ENCODE measurements at regions of chr20 and their contacts with region 1.

Region 1: DNA sequence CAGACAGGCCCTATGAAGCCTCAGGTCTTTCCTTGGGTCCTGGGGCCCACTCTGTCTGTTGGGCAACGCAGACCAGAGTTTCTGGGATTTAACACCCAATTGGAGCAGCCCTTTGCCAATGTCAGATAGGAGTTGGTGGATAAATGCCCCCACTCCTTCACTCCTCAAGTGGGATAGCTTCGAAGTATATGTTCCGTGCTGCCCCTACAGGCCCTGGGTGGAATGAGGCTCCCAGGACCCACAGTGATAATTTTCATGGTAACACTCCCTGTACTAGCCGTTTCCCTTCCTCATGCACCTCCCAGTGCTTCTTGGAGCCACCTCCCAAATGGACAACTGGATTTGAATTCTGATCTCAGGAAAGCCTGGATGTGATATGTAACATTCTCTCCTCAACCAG is 145.4 kb downstream of the FOXA2 start:
- DNase-seq: peak; percentile 54
- ATAC-seq: peak; percentile 100
- H3K4me3 ChIP-seq: no peak overlapping the region
- H3K27ac ChIP-seq: no peak overlapping the region
- H3K4me1 ChIP-seq: peaks cover 15% of the 10 kb centered on the region
- H3K27me3 ChIP-seq: peaks cover 0 to 5% of the 10 kb centered on the region in 2 experiments; a peak in 3 of 5 replicates
- CTCF ChIP-seq: peak; percentile 67
- EP300 ChIP-seq: no peak
- POLR2A ChIP-seq: no peak
- RAD21 ChIP-seq: peak; percentile 74

Region 2: GRCh38 chr20:22339091-22339881 is 99.6 kb before region 1 on chr20:
- CTCF ChIA-PET with region 1: interaction called, 4 read pairs
- POLR2A ChIA-PET with region 1: no interaction called
- in situ Hi-C with region 1: no loop called
- intact Hi-C with region 1: loop called (anchors 2 kb)
- DNase-seq: peak; percentile 84
- ATAC-seq: peak; percentile 77
- H3K4me3 ChIP-seq: no peak overlapping the region
- H3K27ac ChIP-seq: no peak overlapping the region
- H3K4me1 ChIP-seq: peaks cover 5% of the 10 kb centered on the region; the same call in 1 of the 2 replicates
- H3K27me3 ChIP-seq: peaks cover 0 to 9% of the 10 kb centered on the region in 2 experiments; a peak in 1 of 5 replicates
- CTCF ChIP-seq: peak; percentile 96
- EP300 ChIP-seq: no peak
- POLR2A ChIP-seq: no peak
- RAD21 ChIP-seq: peak; percentile 95

Region 3: DNA sequence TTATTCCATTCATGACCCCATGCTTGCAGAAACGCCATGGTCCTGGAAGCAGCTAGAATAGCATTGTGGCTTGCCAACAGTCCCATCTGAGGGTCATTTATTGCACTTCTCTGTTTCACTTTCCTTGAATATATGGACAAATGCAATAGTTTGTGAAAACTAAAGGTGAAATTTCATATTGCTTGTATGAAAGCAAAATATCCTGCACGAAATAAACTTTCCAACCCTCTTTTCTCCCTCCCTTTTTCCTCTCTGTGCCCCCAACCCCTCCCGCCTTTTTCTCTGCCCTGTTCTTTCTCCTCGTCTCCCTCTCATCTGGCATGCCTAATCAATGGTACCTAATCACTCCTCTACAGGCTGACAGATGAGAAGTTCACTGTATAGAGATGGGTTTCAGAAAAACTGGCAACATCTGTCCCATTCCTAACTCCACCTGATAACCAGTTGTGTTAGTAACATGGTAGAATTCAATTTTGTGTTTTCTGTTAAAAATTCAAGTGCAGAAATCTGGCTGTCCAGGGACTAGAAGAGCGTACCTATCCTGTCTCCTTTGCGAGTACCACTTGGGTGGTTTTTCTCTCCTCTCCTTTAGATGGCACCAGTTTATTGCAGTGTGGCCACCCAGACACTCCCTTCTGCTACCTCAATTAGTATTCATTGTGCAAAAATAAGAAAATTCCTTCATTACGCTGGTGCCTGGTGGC is 53.2 kb before region 1 on chr20:
- CTCF ChIA-PET with region 1: interaction called, 4 read pairs
- POLR2A ChIA-PET with region 1: no interaction called
- in situ Hi-C with region 1: no loop called
- intact Hi-C with region 1: loop called (anchors 2 kb)
- DNase-seq: peak; percentile 75
- ATAC-seq: peak; percentile 94
- H3K4me3 ChIP-seq: no peak overlapping the region
- H3K27ac ChIP-seq: no peak overlapping the region
- H3K4me1 ChIP-seq: peaks cover 17% of the 10 kb centered on the region
- H3K27me3 ChIP-seq: peaks cover 0 to 45% of the 10 kb centered on the region in 2 experiments; a peak in 3 of 5 replicates
- CTCF ChIP-seq: peak; percentile 92
- EP300 ChIP-seq: no peak
- POLR2A ChIP-seq: no peak
- RAD21 ChIP-seq: peak; percentile 95

Region 4: DNA sequence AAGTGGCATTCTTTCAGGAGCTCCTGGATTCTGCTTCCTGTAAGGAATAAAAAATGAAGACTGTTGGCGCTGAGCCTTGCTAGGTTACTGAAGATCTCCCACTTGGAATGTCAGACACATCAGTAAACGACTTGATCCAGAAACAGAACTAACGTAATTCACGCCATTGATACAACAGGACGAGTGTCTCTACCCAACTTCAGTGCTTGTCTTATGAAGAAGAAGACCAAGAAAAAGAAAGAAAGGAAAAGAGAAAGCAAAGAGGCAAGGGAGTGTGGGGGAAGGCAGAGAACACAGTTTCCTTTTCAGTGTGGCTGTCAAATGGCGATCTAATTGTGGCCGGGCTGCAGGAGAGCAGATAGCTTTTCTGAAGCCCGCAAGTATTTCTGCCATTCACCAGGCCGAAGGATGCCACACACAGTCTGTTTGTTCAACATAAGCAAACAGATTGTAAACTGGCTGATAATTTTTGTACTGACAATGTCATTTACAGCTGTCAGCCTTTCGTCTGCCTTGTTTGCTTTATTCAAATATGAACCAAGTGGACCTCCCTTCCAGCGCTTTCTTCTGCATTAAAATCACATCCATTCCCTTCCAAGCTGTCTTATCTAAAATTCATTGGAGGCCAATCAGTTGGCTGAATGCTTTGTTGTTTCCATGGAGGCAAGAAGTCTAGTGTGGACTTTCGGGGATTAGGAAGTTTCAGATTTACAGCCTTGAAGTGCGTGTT is 35.1 kb before region 1 on chr20:
- CTCF ChIA-PET with region 1: no interaction called
- POLR2A ChIA-PET with region 1: no interaction called
- in situ Hi-C with region 1: no loop called
- intact Hi-C with region 1: loop called (anchors 5 kb)
- DNase-seq: peak; percentile 77
- ATAC-seq: peak; percentile 90
- H3K4me3 ChIP-seq: peak overlapping the region; percentile 47 to 69 (median 69)
- H3K27ac ChIP-seq: peak overlapping the region; percentile 17
- H3K4me1 ChIP-seq: peaks cover 47% of the 10 kb centered on the region
- H3K27me3 ChIP-seq: peaks cover 0 to 12% of the 10 kb centered on the region in 2 experiments; a peak in 3 of 5 replicates
- CTCF ChIP-seq: no peak
- EP300 ChIP-seq: 0 out of 4 replicates have a peak, but pooled peaks of 1 of the 2 experiments have one; percentile 33
- POLR2A ChIP-seq: no peak
- RAD21 ChIP-seq: 0 out of 2 replicates have a peak, but pooled peaks have one; percentile 7